ENCODE measurements at regions of chr1 and their contacts with region 1.

Region 1: DNA sequence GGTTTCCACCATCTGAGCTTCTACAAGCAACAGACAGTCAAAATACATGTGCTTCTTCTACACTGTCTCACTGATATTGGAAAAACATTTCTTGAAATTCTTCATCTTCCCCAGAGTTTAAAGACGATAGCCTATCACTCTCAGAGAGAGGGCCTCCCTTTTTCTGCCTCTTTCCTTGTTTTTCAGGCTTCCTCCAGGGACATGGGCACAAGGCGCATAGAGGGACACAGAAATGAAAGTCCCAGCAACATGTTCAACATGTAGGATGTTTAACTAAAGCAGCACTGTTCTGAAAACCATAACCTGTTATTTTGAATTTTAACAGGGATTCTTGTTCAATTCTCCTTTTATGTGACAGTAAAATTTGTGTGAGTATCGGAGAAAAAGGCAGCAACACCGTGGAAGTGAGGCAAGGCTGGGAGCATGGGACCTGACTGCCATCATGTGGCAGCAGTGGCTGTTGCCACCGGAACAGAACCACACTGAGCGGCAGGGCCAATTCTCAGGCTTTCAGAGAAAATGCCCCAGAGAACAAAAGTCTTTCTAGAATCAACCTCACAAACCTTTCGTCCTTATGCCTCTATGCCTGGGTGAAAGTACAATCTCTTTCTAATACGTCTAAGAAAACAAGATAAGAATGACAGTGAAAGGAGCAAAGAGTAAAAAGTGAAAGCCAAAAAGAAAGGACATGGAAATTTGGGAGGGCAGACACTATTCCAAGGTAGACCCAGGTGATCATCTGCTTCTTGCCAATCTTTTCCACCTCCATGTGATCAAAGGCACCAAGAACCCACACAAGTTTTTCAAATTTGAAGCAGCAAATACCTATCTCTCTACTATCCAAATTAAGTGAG is 54.5 kb downstream of the PCNX2 start:
- DNase-seq: no peak
- ATAC-seq: no peak
- H3K4me3 Mint-ChIP-seq: no peak overlapping the region
- H3K27ac Mint-ChIP-seq: no peak overlapping the region
- H3K4me1 Mint-ChIP-seq: no peaks in the 10 kb centered on the region
- H3K27me3 Mint-ChIP-seq: no peaks in the 10 kb centered on the region
- CTCF ChIP-seq: no peak

Region 2: DNA sequence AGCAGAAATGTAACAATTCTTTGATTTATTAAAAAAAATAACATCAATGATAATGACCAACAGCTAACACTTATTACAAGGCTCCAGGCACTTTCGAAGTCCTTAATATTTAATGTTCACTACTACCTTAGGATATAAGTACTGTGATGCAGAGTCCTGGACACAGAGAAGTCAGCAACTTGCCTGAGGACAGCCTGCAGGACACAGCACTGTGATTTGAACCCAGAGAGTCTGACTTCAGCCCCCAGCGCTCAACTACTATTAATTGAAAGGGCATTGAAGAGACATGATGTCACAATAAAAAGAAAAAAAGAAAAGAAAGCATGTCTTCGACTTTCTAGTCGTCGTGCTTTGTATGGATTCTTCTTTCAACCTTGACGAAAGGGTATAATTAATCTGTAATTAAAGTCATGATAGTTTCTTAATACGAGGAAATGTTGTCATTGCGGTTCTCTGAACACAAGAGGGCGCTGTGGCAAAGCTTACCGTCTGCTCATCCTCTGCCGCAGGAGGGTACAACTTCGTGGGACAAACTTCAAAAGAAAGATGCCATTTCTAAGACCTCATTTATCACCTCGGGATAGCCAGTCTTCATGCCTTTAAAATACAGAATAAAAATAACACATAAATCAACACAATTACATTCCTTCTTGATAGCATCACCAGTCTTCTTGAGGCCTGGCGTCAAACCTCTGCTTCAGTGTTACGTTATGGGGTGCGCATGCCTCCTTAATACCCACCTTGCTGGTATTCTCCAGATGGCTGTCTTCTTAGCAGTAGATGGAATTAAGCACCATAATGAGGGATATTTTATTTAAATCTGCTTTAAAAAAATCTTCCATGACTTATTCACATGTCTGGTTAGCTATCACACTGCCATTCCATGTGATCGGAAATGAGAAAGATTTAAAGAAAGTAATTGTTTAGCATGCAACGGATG is 1374.4 kb before region 1 on chr1:
- CTCF ChIA-PET with region 1: no interaction called
- POLR2A ChIA-PET with region 1: no interaction called
- intact Hi-C with region 1: loop called (anchors 10 kb)
- DNase-seq: no peak
- ATAC-seq: no peak
- H3K4me3 Mint-ChIP-seq: no peak overlapping the region
- H3K27ac Mint-ChIP-seq: no peak overlapping the region
- H3K4me1 Mint-ChIP-seq: peaks cover 20% of the 10 kb centered on the region
- H3K27me3 Mint-ChIP-seq: no peaks in the 10 kb centered on the region
- CTCF ChIP-seq: peak; percentile 55

Region 3: GRCh38 chr1:233151861-233152260 is 89.2 kb before region 1 on chr1:
- CTCF ChIA-PET with region 1: no interaction called
- POLR2A ChIA-PET with region 1: no interaction called
- intact Hi-C with region 1: no loop called
- DNase-seq: no peak
- ATAC-seq: no peak
- H3K4me3 Mint-ChIP-seq: no peak overlapping the region
- H3K27ac Mint-ChIP-seq: no peak overlapping the region
- H3K4me1 Mint-ChIP-seq: no peaks in the 10 kb centered on the region
- H3K27me3 Mint-ChIP-seq: no peaks in the 10 kb centered on the region
- CTCF ChIP-seq: no peak

Measured in activated B cell treated with CpG ODN at 0.5 μM for 24 hours (primary cell).